Activated CD4-positive, alpha-beta memory T cell treated with anti-CD3 and anti-CD28 coated beads, Interleukin-2, amount 10 ng/mL, durations not matched to agents 7 days and 5 days (primary cell): ENCODE measurements at regions of chr3 and their contacts with region 1.

Region 1: GRCh38 chr3:49093853-49094767 is at the start of gene QRICH1:
- DNase-seq: peak; percentile 97
- H3K4me3 Mint-ChIP-seq: peak within 1 kb of the TSS; percentile 84
- H3K27ac Mint-ChIP-seq: peak within 1 kb of the TSS; percentile 91
- H3K4me1 Mint-ChIP-seq: peaks cover 34% of the 10 kb centered on the region
- H3K27me3 Mint-ChIP-seq: no peaks in the 10 kb centered on the region
- total RNA-seq, gene QRICH1: 136 to 140 TPM

Region 2: GRCh38 chr3:49007068-49007770 is 86.9 kb before region 1 on chr3 and contains the start of gene WDR6:
- CTCF ChIA-PET with region 1: interaction called, 15 read pairs
- POLR2A ChIA-PET with region 1: interaction called, 42 read pairs
- DNase-seq: peak; percentile 98
- H3K4me3 Mint-ChIP-seq: peak within 1 kb of the TSS; percentile 99
- H3K27ac Mint-ChIP-seq: peak within 1 kb of the TSS; percentile 99
- H3K4me1 Mint-ChIP-seq: peaks cover 34% of the 10 kb centered on the region
- H3K27me3 Mint-ChIP-seq: no peaks in the 10 kb centered on the region
- total RNA-seq, gene WDR6: 135 to 148 TPM

Region 3: GRCh38 chr3:49028673-49029562 is 65.2 kb before region 1 on chr3 and contains the start of gene IMPDH2:
- CTCF ChIA-PET with region 1: interaction called, 28 read pairs
- POLR2A ChIA-PET with region 1: interaction called, 99 read pairs
- DNase-seq: peak; percentile 94
- H3K4me3 Mint-ChIP-seq: peak within 1 kb of the TSS; percentile 84
- H3K27ac Mint-ChIP-seq: peak within 1 kb of the TSS; percentile 86
- H3K4me1 Mint-ChIP-seq: peaks cover 50% of the 10 kb centered on the region
- H3K27me3 Mint-ChIP-seq: no peaks in the 10 kb centered on the region
- total RNA-seq, gene IMPDH2: 131 to 133 TPM

Region 4: GRCh38 chr3:49120438-49121131 is 26.5 kb after region 1 on chr3 and contains the start of gene USP19:
- CTCF ChIA-PET with region 1: interaction called, 6 read pairs
- POLR2A ChIA-PET with region 1: interaction called, 75 read pairs
- DNase-seq: peak; percentile 95
- H3K4me3 Mint-ChIP-seq: peak within 1 kb of the TSS; percentile 83
- H3K27ac Mint-ChIP-seq: peak within 1 kb of the TSS; percentile 90
- H3K4me1 Mint-ChIP-seq: peaks cover 24% of the 10 kb centered on the region
- H3K27me3 Mint-ChIP-seq: no peaks in the 10 kb centered on the region
- total RNA-seq, gene USP19: 61.2 to 61.5 TPM

Region 5: DNA sequence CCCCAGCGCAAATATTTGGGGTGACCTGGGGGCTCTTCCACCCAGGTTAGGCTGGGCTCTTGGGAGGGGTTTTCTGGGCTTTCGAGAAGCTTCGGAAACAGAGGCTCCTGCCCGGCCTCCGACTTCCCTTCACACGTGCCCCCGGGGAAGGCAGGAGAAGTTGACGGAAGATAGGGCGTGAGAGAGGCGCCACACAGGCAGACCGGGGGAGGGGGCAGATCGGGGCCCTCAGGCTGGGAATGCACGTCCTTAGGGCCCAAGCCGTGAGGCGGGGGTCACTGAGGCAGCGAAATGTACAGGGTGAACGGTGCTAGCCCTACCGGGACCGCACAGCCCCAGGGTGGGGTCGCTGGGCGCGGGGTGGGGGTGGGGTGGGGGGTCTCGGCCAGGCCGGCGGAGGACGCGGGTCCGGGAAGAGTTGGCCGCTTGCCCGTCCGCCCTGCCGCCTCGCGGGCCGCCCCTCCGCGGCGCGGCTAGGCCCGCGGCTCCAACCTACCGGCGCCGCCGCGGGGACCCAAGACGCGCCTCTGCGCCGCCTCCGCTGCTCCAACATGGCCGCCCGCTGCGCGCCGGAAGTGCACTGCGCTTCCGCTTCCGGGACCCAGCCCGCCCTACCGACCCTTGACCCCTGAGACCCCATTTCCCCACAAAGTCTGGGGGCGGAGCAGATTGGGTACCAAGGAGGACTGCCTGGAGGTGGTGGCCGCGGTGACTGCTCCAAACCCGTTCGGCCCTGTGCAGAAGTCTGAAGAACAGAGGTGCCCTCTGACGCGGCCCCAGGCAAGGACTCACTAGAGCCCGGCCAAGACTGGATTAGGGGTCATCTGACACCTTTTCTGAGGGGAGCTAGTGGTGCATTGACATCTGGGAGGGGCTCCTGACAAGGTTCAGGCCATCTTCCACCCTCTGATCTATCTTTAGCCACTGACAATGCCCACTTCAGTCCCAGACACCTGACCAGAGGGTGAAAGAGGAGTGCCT is 72.0 kb after region 1 on chr3 and contains the start of gene CCDC71:
- CTCF ChIA-PET with region 1: interaction called, 5 read pairs
- POLR2A ChIA-PET with region 1: interaction called, 16 read pairs
- DNase-seq: peak; percentile 81
- H3K4me3 Mint-ChIP-seq: peak within 1 kb of the TSS; percentile 89
- H3K27ac Mint-ChIP-seq: peak within 1 kb of the TSS; percentile 83
- H3K4me1 Mint-ChIP-seq: peaks cover 42% of the 10 kb centered on the region
- H3K27me3 Mint-ChIP-seq: no peaks in the 10 kb centered on the region
- total RNA-seq, gene CCDC71: 19.9 to 20.9 TPM

Region 6: GRCh38 chr3:49469936-49470713 is 376.0 kb after region 1 on chr3 and contains the start of gene DAG1:
- CTCF ChIA-PET with region 1: no interaction called
- POLR2A ChIA-PET with region 1: interaction called, 16 read pairs
- DNase-seq: peak; percentile 97
- H3K4me3 Mint-ChIP-seq: peak within 1 kb of the TSS; percentile 89
- H3K27ac Mint-ChIP-seq: peak within 1 kb of the TSS; percentile 94
- H3K4me1 Mint-ChIP-seq: peaks cover 22% of the 10 kb centered on the region
- H3K27me3 Mint-ChIP-seq: no peaks in the 10 kb centered on the region
- total RNA-seq, gene DAG1: 13.8 to 16.5 TPM